AG04449 (cell line): ENCODE measurements at regions of chr2 and their contacts with region 1.

Region 1: DNA sequence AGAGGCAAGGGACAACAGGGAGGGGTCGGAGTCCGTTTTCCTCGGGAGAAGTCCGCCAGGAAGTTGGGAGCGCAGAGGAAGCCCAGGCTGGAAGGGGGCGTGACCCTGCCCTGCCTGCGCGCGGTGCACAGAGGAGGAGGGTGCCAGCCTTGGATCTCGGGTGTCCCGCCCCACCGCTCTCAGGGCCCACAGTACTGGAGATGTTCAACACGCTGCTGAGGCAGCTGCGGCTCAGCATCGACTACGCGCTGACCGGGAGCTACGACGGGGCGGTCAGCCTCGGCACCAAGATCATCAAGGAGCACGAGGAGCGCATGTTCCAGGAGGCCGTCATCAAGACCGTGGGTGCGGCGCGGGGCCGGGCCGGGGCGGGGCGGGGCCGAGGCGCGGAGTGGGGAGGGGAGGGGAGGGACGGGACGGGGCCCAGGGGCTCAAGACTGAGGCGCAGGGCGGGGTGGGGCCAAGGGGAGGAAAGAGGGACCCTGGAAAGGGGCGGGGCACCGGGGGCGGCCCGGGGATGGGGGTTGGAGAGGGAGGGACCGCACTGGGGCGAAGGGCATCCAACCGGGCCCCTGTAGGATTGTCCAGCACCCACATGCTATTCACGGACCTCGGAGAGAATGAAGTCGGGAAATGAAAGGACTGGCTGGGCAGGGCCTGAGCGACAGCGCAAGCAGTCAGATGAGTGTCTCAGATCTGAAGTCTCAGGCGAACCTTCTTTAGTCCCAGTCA is 36.6 kb downstream of the POMC start:
- DNase-seq: no peak
- H3K4me3 ChIP-seq: no peak overlapping the region
- CTCF ChIP-seq: no peak

Region 2: GRCh38 chr2:24816884-24817283 is 314.8 kb before region 1 on chr2:
- CTCF ChIA-PET with region 1: no interaction called
- POLR2A ChIA-PET with region 1: no interaction called
- DNase-seq: peak; percentile 67
- H3K4me3 ChIP-seq: no peak overlapping the region
- CTCF ChIP-seq: no peak

Region 3: DNA sequence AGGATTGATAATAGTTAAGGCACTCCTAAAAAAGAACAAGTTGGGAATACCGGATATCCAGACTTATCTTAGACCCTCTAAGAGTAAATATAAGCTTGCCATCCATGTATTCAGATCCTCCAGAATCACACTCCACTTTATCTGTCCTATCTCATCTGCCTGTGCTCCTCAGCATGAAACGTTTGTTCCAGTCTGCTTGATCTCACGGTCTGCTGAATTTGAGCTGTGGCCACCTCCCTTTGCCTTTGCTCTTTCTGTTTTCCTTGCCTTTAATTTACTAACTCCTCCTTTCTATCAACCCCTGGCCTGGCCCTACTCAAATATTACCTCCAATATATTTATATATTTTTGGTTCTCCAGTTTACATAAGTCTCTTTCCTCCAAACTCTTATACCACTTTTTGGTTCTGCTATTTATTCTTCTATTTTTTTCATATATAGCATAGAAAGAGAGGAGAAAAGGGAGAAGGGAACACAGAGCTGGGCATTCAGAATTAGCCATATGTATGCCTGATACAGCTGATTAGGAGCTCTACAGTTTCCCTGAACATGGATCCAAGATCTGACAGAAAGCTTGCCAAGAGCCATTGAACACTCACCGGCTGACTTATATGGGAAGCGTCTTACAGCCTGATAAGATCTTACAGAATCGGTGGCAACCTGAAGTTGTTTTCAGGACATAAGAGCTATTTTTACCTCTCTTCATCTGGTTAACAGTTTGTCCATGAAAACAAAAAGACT is 138.2 kb before region 1 on chr2:
- CTCF ChIA-PET with region 1: interaction called, 11 read pairs
- POLR2A ChIA-PET with region 1: no interaction called
- DNase-seq: no peak
- H3K4me3 ChIP-seq: no peak overlapping the region
- CTCF ChIP-seq: no peak

Region 4: GRCh38 chr2:25103287-25103871 is 28.4 kb before region 1 on chr2:
- CTCF ChIA-PET with region 1: interaction called, 11 read pairs
- POLR2A ChIA-PET with region 1: no interaction called
- DNase-seq: peak; percentile 41
- H3K4me3 ChIP-seq: no peak overlapping the region
- CTCF ChIP-seq: no peak

Region 5: DNA sequence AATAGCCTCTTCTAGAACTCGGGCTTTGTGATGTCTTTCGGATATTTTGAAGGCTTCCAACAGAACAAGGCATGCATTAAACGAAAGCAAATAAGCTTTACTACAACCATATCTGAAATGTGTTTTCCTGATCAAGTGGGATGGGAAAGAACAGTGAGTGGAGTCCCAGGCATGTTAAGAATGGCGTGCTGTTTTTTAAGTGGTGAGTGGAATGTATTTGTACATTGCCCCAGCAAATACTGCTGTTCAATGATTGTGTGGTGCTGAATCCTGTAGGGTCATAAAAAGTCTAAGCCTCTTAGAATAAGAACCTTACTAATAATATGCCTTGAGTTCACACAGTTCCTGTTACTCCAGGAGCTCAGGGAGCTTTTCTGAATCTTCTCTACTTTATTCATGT is 15.8 kb before region 1 on chr2:
- CTCF ChIA-PET with region 1: interaction called, 42 read pairs
- POLR2A ChIA-PET with region 1: no interaction called
- DNase-seq: peak; percentile 49
- H3K4me3 ChIP-seq: no peak overlapping the region
- CTCF ChIP-seq: no peak

Region 6: GRCh38 chr2:25309402-25309801 is 177.7 kb after region 1 on chr2:
- CTCF ChIA-PET with region 1: no interaction called
- POLR2A ChIA-PET with region 1: no interaction called
- DNase-seq: no peak
- H3K4me3 ChIP-seq: no peak overlapping the region
- CTCF ChIP-seq: peak; percentile 47